ENCODE measurements at regions of chr11 and their contacts with region 1.

Region 1: DNA sequence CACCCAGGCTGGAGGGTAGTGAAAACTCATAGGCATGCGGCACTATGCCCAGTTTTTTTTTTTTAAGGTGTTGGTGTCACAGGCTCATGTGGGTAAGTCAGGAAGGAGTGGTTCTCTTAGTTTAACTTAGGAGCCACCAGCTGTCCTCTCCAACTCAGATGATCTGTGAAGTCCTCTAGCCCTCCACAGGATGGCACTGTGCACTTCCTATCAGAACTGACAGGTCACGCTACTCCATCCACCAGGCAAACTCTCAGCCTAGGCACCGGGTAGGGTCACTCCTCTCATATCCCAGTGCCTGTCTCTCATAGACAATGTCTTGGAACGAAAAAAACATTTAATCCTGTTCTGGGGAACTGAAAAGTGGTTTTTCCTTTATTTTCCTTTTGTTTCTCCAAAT is 16.5 kb downstream of the NAP1L4 start:
- DNase-seq: no peak
- H3K4me3 ChIP-seq: no peak overlapping the region
- H3K27ac ChIP-seq: no peak overlapping the region
- H3K4me1 ChIP-seq: no peaks in the 10 kb centered on the region
- H3K27me3 ChIP-seq: no peaks in the 10 kb centered on the region
- CTCF ChIP-seq: peak; percentile 17 to 44 (median 34)
- EP300 ChIP-seq: no peak
- POLR2A ChIP-seq: no peak

Region 2: DNA sequence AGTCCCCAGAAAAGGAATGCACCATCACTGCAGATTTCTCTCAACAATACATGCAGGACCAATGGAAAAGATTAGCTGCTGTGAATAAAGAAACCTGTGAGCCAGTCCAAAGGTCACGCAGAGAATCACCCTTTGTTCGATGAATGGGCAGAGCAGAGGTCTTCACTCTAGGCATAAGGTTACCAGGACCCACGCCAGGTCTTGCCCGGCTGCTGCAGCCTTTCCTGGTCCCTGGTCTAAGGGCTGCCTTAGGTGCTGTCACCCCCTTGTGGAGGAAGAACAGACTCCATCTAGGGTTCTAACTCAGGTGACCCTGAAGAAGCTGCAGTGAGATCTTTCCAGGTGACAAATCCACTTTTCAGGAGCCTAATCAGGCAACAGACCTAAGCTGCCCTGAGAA is 45.5 kb after region 1 on chr11:
- in situ Hi-C with region 1: loop called in 1 of 4 experiments (anchors 10 kb)
- intact Hi-C with region 1: no loop called
- DNase-seq: peak; percentile 61
- H3K4me3 ChIP-seq: no peak overlapping the region
- H3K27ac ChIP-seq: no peak overlapping the region
- H3K4me1 ChIP-seq: peaks cover 0 to 15% (median 5%) of the 10 kb centered on the region in 4 donors
- H3K27me3 ChIP-seq: no peaks in the 10 kb centered on the region
- CTCF ChIP-seq: peak; percentile 35 to 70 (median 61)
- EP300 ChIP-seq: no peak
- POLR2A ChIP-seq: no peak

Region 3: GRCh38 chr11:3073029-3073435 is 97.4 kb after region 1 on chr11:
- in situ Hi-C with region 1: no loop called
- intact Hi-C with region 1: no loop called
- DNase-seq: no peak
- H3K4me3 ChIP-seq: no peak overlapping the region
- H3K27ac ChIP-seq: no peak overlapping the region
- H3K4me1 ChIP-seq: no peaks in the 10 kb centered on the region
- H3K27me3 ChIP-seq: no peaks in the 10 kb centered on the region
- CTCF ChIP-seq: no peak
- EP300 ChIP-seq: no peak
- POLR2A ChIP-seq: no peak

Measured in transverse colon (tissue), 4 donors.